ENCODE measurements at regions of chr5 and their contacts with region 1.

Region 1: GRCh38 chr5:442335-443238 is at the start of gene EXOC3:
- DNase-seq: peak; percentile 52
- ATAC-seq: peak; percentile 92
- H3K4me3 ChIP-seq: peak within 1 kb of the TSS; percentile 95 to 100 (median 99)
- H3K27ac ChIP-seq: peak within 1 kb of the TSS; percentile 58
- H3K4me1 ChIP-seq: peaks cover 19% of the 10 kb centered on the region
- H3K27me3 ChIP-seq: peaks cover 0 to 4% of the 10 kb centered on the region in 2 experiments; a peak in 1 of 5 replicates
- CTCF ChIP-seq: 0 out of 2 replicates have a peak, but pooled peaks have one; percentile 11
- EP300 ChIP-seq: no peak
- POLR2A ChIP-seq: peak; percentile 67 to 90
- RAD21 ChIP-seq: no peak
- total RNA-seq, gene EXOC3: 16.0 and 20.5 TPM in 2 replicates

Region 2: DNA sequence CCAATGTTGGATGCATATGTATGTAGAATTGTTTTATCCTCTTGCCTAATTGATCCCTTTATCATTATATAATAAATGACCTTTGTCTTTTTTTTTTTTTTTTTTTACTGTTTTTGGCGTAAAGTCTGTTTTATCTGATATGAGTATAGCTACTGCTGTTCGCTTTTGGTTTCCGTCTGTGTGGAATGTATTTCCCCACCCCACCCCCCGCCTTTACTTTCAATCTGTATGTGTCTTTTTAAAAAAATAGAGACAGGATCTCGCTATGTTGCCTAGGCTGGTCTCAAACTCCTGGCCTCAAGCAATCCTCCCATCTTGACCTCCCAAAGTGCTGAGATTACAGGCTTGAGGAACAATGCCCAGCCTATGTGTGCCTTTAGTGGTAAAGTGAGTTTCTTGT is 109.7 kb before region 1 on chr5:
- CTCF ChIA-PET with region 1: no interaction called
- POLR2A ChIA-PET with region 1: no interaction called
- in situ Hi-C with region 1: no loop called
- intact Hi-C with region 1: no loop called
- DNase-seq: no peak
- ATAC-seq: no peak
- H3K4me3 ChIP-seq: no peak overlapping the region
- H3K27ac ChIP-seq: no peak overlapping the region
- H3K4me1 ChIP-seq: no peaks in the 10 kb centered on the region
- H3K27me3 ChIP-seq: no peaks in the 10 kb centered on the region; a peak in 1 of 5 replicates
- CTCF ChIP-seq: no peak
- EP300 ChIP-seq: no peak
- POLR2A ChIP-seq: no peak
- RAD21 ChIP-seq: no peak

Region 3: GRCh38 chr5:472656-473553 is 30.3 kb after region 1 on chr5:
- CTCF ChIA-PET with region 1: no interaction called
- POLR2A ChIA-PET with region 1: interaction called, 14 read pairs
- in situ Hi-C with region 1: no loop called
- intact Hi-C with region 1: no loop called
- DNase-seq: peak; percentile 52
- ATAC-seq: peak; percentile 58
- H3K4me3 ChIP-seq: peak overlapping the region; percentile 79 to 89 (median 89)
- H3K27ac ChIP-seq: peak overlapping the region; percentile 72
- H3K4me1 ChIP-seq: peaks cover 32% of the 10 kb centered on the region
- H3K27me3 ChIP-seq: peaks cover 8 to 32% of the 10 kb centered on the region in 2 experiments
- CTCF ChIP-seq: peak; percentile 8; the same call in 1 of the 2 replicates
- EP300 ChIP-seq: no peak
- POLR2A ChIP-seq: peak in 1 of 2 experiments; percentile 69; a peak in 2 of 4 replicates
- RAD21 ChIP-seq: peak; percentile 53

Region 4: GRCh38 chr5:513216-514100 is 70.9 kb after region 1 on chr5:
- CTCF ChIA-PET with region 1: no interaction called
- POLR2A ChIA-PET with region 1: no interaction called
- in situ Hi-C with region 1: no loop called
- intact Hi-C with region 1: no loop called
- DNase-seq: no peak
- ATAC-seq: no peak
- H3K4me3 ChIP-seq: no peak overlapping the region
- H3K27ac ChIP-seq: no peak overlapping the region
- H3K4me1 ChIP-seq: peaks cover 14% of the 10 kb centered on the region
- H3K27me3 ChIP-seq: peaks cover 1 to 39% of the 10 kb centered on the region in 2 experiments; a peak in 3 of 5 replicates
- CTCF ChIP-seq: no peak
- EP300 ChIP-seq: no peak
- POLR2A ChIP-seq: no peak
- RAD21 ChIP-seq: no peak

Region 5: DNA sequence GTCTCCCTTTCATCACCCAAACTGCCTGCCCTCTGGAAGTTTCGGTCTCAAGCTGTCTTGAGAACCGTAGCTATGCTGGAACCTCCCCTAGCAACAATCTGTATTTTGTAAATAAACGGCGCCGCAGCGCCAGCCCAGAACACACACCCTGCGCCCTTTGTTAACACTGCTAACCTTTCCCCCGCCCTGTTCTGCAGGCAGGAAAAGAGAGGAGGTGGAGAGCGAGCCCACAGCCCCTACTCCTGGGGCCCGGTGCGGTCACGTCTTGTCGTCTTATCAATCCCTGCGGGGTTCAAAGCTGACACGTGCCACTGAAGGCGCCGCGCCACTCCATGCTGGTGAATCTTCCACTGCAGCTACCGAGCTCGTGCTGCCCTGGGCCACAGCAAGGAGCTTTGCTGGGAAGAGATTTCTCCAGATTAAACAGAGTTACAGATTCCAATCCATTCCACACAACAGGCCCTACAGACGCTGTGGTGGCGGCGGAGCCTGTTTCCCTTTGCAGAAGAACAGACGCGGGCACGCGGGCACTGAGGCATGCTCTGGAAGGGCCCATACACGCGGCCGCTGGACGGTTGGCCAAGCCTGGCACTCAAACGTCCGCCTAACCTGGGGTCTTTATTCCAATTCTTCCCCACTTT is 316.6 kb after region 1 on chr5:
- CTCF ChIA-PET with region 1: no interaction called
- POLR2A ChIA-PET with region 1: no interaction called
- in situ Hi-C with region 1: no loop called
- intact Hi-C with region 1: no loop called
- DNase-seq: peak; percentile 81
- ATAC-seq: peak; percentile 68
- H3K4me3 ChIP-seq: peak overlapping the region in 1 of 3 experiments; percentile 51; a peak in 2 of 6 replicates
- H3K27ac ChIP-seq: peak overlapping the region; percentile 14
- H3K4me1 ChIP-seq: peaks cover 47% of the 10 kb centered on the region
- H3K27me3 ChIP-seq: peaks cover 3 to 57% of the 10 kb centered on the region in 2 experiments
- CTCF ChIP-seq: 0 out of 2 replicates have a peak, but pooled peaks have one; percentile 24
- EP300 ChIP-seq: peak; percentile 62 to 91
- POLR2A ChIP-seq: peak in 1 of 2 experiments; percentile 68; a peak in 2 of 4 replicates
- RAD21 ChIP-seq: no peak

Region 6: DNA sequence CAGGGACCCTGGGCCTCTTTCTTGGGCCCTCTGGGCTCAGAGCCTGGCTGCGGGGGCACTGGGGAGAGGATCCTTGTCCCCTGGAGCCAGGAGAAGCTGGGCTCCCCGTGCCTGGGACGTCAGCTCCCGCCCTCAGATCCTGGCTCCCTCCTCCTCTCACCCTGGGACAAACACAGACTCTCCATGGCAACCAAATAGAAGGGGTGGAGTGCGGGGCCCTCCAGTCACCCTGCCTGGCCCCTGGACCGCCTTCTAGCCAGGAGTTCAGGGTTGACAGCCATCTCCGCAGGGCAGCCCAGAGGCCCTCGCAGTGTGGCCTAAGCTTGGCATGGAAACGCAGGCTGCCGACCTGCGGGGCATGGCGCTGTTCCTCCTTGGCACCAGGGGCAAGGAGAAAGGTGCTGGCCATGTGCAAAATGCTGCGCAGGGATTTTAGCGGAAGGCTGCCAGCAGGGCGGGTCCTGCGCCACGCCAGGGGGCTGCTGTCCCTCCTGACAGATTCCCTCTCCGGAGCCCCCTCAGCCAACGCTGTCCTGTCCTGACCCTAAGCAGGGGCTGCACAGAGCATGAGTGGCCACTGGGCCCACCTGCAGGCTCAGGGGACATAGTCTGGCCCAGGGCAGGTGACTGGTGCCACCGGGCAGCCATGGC is 407.2 kb after region 1 on chr5:
- CTCF ChIA-PET with region 1: no interaction called
- POLR2A ChIA-PET with region 1: no interaction called
- in situ Hi-C with region 1: no loop called
- intact Hi-C with region 1: no loop called
- DNase-seq: peak; percentile 92
- ATAC-seq: peak; percentile 86
- H3K4me3 ChIP-seq: peak overlapping the region; percentile 31 to 71 (median 43); a peak in 5 of 6 replicates
- H3K27ac ChIP-seq: peak overlapping the region; percentile 37
- H3K4me1 ChIP-seq: peaks cover 39% of the 10 kb centered on the region
- H3K27me3 ChIP-seq: peaks cover 1 to 17% of the 10 kb centered on the region in 2 experiments; a peak in 3 of 5 replicates
- CTCF ChIP-seq: no peak
- EP300 ChIP-seq: peak in 1 of 2 experiments; percentile 37; a peak in 1 of 4 replicates
- POLR2A ChIP-seq: peak in 1 of 2 experiments; percentile 79; a peak in 2 of 4 replicates
- RAD21 ChIP-seq: no peak